ENCODE measurements at regions of chr22 and their contacts with region 1.

Region 1: GRCh38 chr22:42169055-42169469 is 38.5 kb upstream of the CYP2D6 start:
- DNase-seq: peak; percentile 84 to 92 (median 87)
- H3K4me3 ChIP-seq: no peak overlapping the region
- H3K27ac ChIP-seq: no peak overlapping the region
- H3K4me1 ChIP-seq: peaks cover 0 to under 1% (median under 1%) of the 10 kb centered on the region in 4 experiments
- H3K27me3 ChIP-seq: no peaks in the 10 kb centered on the region

Region 2: DNA sequence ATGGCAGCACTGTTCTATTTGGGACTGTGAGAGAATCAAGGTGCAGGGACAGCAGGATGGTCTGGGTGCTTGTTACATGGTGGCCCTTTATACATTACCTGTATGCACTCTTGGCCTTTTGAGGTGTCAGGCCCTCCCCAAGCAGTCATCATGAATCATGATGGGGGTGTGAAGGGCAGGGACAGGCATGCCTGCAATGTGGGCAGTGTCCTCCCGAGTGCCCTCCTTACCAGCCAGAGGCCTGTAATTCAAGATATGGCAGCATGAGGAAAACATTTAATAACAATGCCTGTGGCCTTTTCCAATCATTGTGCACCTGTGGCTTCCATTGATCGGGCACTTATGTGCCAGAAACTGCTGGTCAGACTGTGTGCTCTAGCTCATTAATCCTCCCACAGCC is 12.9 kb before region 1 on chr22:
- CTCF ChIA-PET with region 1: interaction called, 16 read pairs
- POLR2A ChIA-PET with region 1: no interaction called
- DNase-seq: no peak
- H3K4me3 ChIP-seq: no peak overlapping the region
- H3K27ac ChIP-seq: no peak overlapping the region
- H3K4me1 ChIP-seq: no peaks in the 10 kb centered on the region
- H3K27me3 ChIP-seq: no peaks in the 10 kb centered on the region

Region 3: GRCh38 chr22:42313804-42314581 is 144.9 kb after region 1 on chr22:
- CTCF ChIA-PET with region 1: interaction called, 37 read pairs
- POLR2A ChIA-PET with region 1: no interaction called
- DNase-seq: peak; percentile 50 to 77 (median 73)
- H3K4me3 ChIP-seq: no peak overlapping the region
- H3K27ac ChIP-seq: no peak overlapping the region
- H3K4me1 ChIP-seq: peaks cover 0 to 31% (median 8%) of the 10 kb centered on the region in 4 experiments
- H3K27me3 ChIP-seq: no peaks in the 10 kb centered on the region

Region 4: DNA sequence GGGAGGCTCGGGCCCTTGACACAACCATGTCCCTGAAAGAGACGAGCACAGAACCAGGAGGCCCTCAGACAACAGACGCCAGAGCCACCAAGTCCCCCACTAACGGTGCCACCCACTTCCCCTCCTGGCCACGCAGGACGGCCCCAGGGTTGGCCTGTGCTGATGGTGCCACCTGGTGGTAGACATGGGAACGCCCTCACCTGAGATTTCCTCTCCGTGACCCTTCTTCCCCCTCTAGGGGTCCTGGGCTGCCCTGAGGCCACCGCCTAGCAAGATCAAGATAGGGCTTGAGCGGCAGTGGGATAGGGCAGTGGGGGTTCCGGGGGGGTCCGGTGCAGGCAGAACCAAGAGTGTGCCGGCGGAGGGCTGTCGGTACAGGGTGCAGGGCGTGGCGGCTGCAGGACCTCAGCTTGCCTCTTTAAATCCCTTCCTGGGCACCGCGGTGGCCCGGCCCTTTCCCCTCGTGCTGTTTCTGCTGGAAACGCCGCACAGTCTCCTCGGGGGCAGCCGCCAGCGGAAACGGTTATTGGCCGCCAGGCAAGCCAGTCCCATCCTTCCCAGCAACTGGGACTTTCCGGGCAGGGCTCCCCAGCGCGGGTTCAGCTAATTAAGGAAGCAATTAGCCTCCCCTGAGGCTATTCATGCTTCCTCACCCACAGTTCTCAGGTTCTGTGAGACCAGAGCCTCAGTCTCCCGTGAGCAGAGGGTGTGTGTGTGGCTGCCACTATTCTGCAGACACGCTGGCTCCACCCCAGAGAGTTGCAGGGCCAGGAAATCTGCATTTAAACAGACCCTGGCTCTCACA is 268.6 kb after region 1 on chr22:
- CTCF ChIA-PET with region 1: interaction called, 60 read pairs
- POLR2A ChIA-PET with region 1: no interaction called
- DNase-seq: peak; percentile 80 to 85 (median 84)
- H3K4me3 ChIP-seq: peak overlapping the region in 6 of 7 experiments; percentile 46 to 79 (median 64)
- H3K27ac ChIP-seq: no peak overlapping the region
- H3K4me1 ChIP-seq: peaks cover 6 to 61% (median 53%) of the 10 kb centered on the region in 4 experiments
- H3K27me3 ChIP-seq: no peaks in the 10 kb centered on the region

Region 5: DNA sequence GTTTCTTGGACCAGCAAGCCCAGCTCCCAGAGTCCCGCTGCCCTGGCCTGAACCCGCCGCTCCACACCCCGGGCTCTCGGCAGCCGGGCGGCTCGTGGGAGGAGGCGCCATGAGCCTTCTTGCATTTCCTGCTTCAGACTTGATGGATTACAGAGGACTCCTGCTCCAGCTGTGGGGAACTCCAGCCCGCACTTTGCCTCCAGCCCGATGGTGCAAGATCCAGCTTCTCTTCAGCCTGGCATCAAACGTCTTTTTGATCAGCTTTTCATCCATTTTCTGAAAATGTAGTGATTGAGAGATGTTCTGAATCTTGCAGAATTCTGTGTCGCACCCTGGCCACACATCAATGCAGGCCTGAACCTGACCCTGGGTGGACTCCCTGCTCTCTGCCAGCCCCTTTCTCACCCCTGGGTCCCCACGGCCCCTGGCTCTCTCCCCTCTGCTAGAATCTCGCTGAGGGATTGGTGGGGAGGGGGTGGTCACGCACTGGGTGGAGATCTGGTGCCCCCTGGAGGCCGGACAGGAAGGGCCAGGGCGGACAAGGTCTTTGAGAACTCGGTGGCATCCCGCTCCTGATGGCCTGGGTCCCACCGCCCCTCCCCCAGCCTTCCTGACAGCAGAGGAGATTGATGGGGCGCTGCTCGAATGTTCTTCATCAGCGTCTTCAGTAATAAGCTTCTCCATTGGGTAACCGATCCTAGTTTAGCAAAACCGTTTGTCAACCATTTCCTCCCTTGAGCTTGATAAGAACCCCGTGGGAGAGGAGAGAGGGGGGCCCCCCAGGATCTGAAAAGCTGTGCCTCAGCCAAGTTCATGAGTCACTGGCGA is 275.2 kb after region 1 on chr22:
- CTCF ChIA-PET with region 1: interaction called, 60 read pairs
- POLR2A ChIA-PET with region 1: interaction called, 3 read pairs
- DNase-seq: peak; percentile 90 to 96 (median 95)
- H3K4me3 ChIP-seq: peak overlapping the region; percentile 23 to 80 (median 47)
- H3K27ac ChIP-seq: peak overlapping the region in 1 of 2 experiments; percentile 72
- H3K4me1 ChIP-seq: peaks cover 8 to 48% (median 43%) of the 10 kb centered on the region in 4 experiments
- H3K27me3 ChIP-seq: no peaks in the 10 kb centered on the region

Region 6: DNA sequence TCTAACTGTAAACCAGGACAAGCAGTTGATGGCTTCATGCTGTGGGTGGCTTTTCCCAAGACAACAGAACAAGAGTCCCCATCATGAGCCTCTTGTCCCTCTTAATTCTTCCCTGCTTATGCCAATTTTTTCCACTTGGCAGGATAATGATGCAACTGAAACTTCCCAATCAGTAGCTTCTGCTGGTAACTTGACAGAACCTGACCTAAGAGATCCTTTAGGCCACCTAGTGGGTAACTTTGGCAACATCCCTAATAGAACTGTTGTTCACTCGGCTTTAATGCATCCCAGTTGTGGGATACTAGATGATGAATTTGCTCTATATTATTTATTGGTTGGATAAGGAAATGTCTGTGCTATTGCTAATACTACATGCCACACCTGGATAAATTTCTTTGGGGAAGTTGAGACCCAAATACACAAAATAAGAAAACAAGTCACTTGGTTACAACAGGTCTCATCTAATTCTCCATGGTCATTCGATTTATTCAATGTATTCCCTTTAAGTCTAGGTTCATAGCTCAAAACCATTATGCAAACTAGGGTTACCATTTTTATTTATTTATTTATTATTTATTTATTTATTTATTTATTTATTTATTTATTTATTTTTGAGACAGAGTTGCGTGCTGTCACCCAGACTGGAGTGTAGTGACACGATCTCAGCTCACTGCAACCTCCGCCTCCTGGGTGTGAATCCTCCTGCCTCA is 304.6 kb after region 1 on chr22:
- CTCF ChIA-PET with region 1: interaction called, 10 read pairs
- POLR2A ChIA-PET with region 1: no interaction called
- DNase-seq: peak; percentile 42 to 70 (median 57)
- H3K4me3 ChIP-seq: no peak overlapping the region
- H3K27ac ChIP-seq: no peak overlapping the region
- H3K4me1 ChIP-seq: no peaks in the 10 kb centered on the region
- H3K27me3 ChIP-seq: peaks cover 0 to 3% (median 0%) of the 10 kb centered on the region in 5 experiments

Measured in common myeloid progenitor, CD34-positive (primary cell).